ENCODE measurements at regions of chr9 and their contacts with region 1.

Region 1: DNA sequence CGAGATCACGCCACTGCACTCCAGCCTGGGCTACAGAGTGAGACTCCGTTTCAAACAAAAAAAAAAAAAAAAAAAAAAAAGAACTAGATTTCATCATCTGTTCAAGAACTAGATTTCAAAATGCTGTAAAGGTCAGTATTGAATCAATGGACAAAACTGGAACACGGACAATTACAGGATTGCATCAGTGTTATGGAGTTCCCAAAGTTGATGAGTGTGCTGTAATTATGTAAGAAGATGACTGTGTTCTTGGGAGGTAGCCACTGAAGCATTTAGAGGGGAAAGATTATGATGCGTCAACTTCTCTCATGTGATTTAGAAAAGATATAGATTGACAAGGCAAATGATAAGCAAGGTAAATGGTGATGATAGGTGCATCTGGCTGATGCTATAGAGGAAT is 6.5 kb downstream of the FAM240B start:
- DNase-seq: no peak
- ATAC-seq: no peak
- H3K4me3 ChIP-seq: no peak overlapping the region
- H3K27ac ChIP-seq: no peak overlapping the region
- H3K4me1 ChIP-seq: no peaks in the 10 kb centered on the region
- H3K27me3 ChIP-seq: peaks cover 0 to 11% of the 10 kb centered on the region in 2 experiments; a peak in 2 of 5 replicates
- CTCF ChIP-seq: no peak
- EP300 ChIP-seq: no peak
- POLR2A ChIP-seq: no peak
- RAD21 ChIP-seq: no peak

Region 2: GRCh38 chr9:38677660-38678303 is 35.6 kb before region 1 on chr9:
- CTCF ChIA-PET with region 1: no interaction called
- POLR2A ChIA-PET with region 1: no interaction called
- in situ Hi-C with region 1: no loop called
- intact Hi-C with region 1: loop called (anchors 5 kb)
- DNase-seq: no peak
- ATAC-seq: no peak
- H3K4me3 ChIP-seq: no peak overlapping the region
- H3K27ac ChIP-seq: no peak overlapping the region
- H3K4me1 ChIP-seq: peaks cover 0 to 3% of the 10 kb centered on the region in 2 experiments; a peak in 1 of 5 replicates
- H3K27me3 ChIP-seq: peaks cover 0 to 23% of the 10 kb centered on the region in 2 experiments; a peak in 1 of 5 replicates
- CTCF ChIP-seq: no peak
- EP300 ChIP-seq: no peak
- POLR2A ChIP-seq: no peak
- RAD21 ChIP-seq: no peak

Region 3: DNA sequence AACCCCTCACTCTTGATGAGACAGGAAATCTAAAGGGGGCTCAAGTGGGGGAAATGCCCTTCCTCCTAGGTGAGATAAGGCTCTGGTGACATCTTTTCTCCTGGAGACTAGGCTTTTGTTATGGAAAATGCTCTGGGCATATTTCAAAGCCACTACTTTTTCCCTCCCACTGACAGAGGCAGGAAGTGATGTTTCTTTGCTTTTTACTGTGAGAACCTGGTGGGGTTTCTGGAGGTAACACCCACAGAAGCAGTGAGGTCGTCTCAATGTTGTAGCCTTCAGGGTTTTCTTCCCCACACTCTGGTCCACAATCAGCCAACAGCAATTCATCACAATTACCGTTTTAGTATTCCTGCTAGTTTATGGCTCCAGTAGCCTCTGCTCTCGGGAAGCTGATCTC is 47.9 kb after region 1 on chr9:
- CTCF ChIA-PET with region 1: no interaction called
- POLR2A ChIA-PET with region 1: no interaction called
- in situ Hi-C with region 1: no loop called
- intact Hi-C with region 1: loop called (anchors 10 kb)
- DNase-seq: no peak
- ATAC-seq: no peak
- H3K4me3 ChIP-seq: no peak overlapping the region
- H3K27ac ChIP-seq: no peak overlapping the region
- H3K4me1 ChIP-seq: no peaks in the 10 kb centered on the region
- H3K27me3 ChIP-seq: no peaks in the 10 kb centered on the region
- CTCF ChIP-seq: no peak
- EP300 ChIP-seq: no peak
- POLR2A ChIP-seq: no peak
- RAD21 ChIP-seq: no peak

Measured in K562 (cell line).